ENCODE measurements at regions of chr1 and their contacts with region 1.

Region 1: DNA sequence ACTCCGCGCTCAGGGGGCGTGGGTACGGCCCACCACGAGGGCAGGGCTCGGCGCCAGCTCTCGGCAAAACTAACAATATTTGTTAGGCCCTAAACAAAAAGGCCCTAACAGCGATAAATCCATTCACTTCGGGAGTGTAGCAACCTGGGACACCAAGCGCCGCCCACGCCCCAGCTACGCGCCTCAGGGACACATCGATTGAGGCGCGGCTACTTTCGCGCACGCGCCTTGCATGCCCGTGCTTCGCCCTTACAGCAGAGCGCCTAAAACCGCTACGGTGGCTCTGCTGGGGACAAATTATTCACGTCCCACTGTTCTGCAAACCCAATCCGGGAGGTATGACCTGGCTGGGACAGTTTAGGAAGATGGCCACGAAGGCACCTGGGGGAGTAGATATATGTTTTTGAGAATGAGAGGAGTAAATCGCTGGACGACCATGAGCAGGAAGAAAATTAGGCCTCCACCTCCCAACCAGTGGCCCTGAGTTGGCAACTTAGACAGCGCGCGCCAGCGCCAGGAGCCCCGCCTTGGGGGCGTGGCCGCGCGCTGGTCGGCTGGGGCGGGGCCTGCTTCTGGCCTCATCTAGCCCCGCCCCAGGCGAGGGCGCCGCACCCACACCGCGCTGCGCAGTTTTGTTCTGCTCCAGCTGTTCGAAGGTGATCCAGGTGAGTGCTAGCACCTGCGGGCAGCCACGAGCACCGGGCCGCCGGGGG is at the start of gene MGST3:
- DNase-seq: peak; percentile 97
- H3K4me3 Mint-ChIP-seq: no peak within 1 kb of the TSS
- H3K27ac Mint-ChIP-seq: no peak within 1 kb of the TSS
- H3K4me1 Mint-ChIP-seq: peaks cover 15% of the 10 kb centered on the region
- H3K27me3 Mint-ChIP-seq: no peaks in the 10 kb centered on the region
- total RNA-seq, gene MGST3: 53.3 to 56.6 TPM

Region 2: GRCh38 chr1:165431079-165431478 is 199.7 kb before region 1 on chr1:
- CTCF ChIA-PET with region 1: no interaction called
- POLR2A ChIA-PET with region 1: no interaction called
- intact Hi-C with region 1: no loop called
- DNase-seq: no peak
- H3K4me3 Mint-ChIP-seq: no peak overlapping the region
- H3K27ac Mint-ChIP-seq: no peak overlapping the region
- H3K4me1 Mint-ChIP-seq: peaks cover 9% of the 10 kb centered on the region
- H3K27me3 Mint-ChIP-seq: no peaks in the 10 kb centered on the region

Region 3: GRCh38 chr1:165645654-165646366 is 15.0 kb after region 1 on chr1:
- CTCF ChIA-PET with region 1: no interaction called
- POLR2A ChIA-PET with region 1: no interaction called
- intact Hi-C with region 1: loop called (anchors 2 kb)
- DNase-seq: peak; percentile 38
- H3K4me3 Mint-ChIP-seq: no peak overlapping the region
- H3K27ac Mint-ChIP-seq: no peak overlapping the region
- H3K4me1 Mint-ChIP-seq: peaks cover 24% of the 10 kb centered on the region
- H3K27me3 Mint-ChIP-seq: no peaks in the 10 kb centered on the region

Region 4: GRCh38 chr1:165686121-165686970 is 55.6 kb after region 1 on chr1:
- CTCF ChIA-PET with region 1: no interaction called
- POLR2A ChIA-PET with region 1: no interaction called
- intact Hi-C with region 1: loop called (anchors 2 kb)
- DNase-seq: no peak
- H3K4me3 Mint-ChIP-seq: no peak overlapping the region
- H3K27ac Mint-ChIP-seq: peak overlapping the region; percentile 71
- H3K4me1 Mint-ChIP-seq: peaks cover 41% of the 10 kb centered on the region
- H3K27me3 Mint-ChIP-seq: no peaks in the 10 kb centered on the region

Region 5: GRCh38 chr1:165697881-165698760 is 67.3 kb after region 1 on chr1 and contains the start of gene ALDH9A1:
- CTCF ChIA-PET with region 1: interaction called, 10 read pairs
- POLR2A ChIA-PET with region 1: interaction called, 4 read pairs
- intact Hi-C with region 1: loop called (anchors 1 kb)
- DNase-seq: peak; percentile 93
- H3K4me3 Mint-ChIP-seq: peak within 1 kb of the TSS; percentile 100
- H3K27ac Mint-ChIP-seq: peak within 1 kb of the TSS; percentile 99
- H3K4me1 Mint-ChIP-seq: peaks cover 25% of the 10 kb centered on the region
- H3K27me3 Mint-ChIP-seq: no peaks in the 10 kb centered on the region
- total RNA-seq, gene ALDH9A1: 34.1 to 43.2 TPM

Region 6: DNA sequence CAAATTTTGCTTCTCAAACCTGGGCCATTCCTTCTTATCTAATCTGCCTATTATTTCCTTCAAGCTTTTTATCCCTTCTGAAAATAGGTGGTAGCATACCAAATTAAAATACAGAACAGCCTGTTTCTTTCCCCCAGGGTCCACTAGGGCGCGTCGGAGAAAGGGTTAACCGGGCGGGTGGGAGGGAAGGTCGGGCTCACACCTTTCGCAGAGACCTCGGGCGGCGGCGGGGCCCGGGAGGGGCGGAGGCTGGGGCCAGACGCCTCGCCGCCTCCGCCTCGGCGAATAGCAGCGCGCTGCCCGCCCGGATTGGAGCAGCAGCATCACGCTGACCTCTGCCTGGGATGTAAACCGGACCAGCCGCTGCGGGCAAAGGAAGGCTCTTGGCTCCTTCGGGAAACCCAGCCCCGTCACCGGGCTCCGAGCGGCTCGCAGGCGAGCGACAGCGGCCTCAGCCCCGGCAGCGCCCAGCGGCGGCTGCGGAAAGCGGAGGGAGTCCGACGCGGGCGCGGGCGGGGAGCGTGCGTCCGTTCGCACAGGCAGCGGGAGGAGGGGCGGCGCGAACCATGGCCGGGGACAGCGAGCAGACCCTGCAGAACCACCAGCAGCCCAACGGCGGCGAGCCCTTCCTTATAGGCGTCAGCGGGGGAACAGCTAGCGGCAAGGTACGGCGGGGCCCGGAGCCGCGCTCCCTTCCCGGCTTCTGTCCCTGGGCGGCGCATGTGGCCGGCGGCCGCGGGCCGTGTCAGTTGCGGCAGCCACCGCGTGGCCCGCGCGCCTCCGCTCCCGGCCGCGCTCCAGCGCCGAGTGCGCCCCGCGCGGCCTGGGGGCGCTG is 196.7 kb after region 1 on chr1 and contains the start of gene UCK2:
- CTCF ChIA-PET with region 1: no interaction called
- POLR2A ChIA-PET with region 1: no interaction called
- intact Hi-C with region 1: loop called (anchors 2 kb)
- DNase-seq: peak; percentile 75
- H3K4me3 Mint-ChIP-seq: peak within 1 kb of the TSS; percentile 91
- H3K27ac Mint-ChIP-seq: peak within 1 kb of the TSS; percentile 88
- H3K4me1 Mint-ChIP-seq: peaks cover 9% of the 10 kb centered on the region
- H3K27me3 Mint-ChIP-seq: no peaks in the 10 kb centered on the region
- total RNA-seq, gene UCK2: 60.1 to 61.8 TPM

Region 7: DNA sequence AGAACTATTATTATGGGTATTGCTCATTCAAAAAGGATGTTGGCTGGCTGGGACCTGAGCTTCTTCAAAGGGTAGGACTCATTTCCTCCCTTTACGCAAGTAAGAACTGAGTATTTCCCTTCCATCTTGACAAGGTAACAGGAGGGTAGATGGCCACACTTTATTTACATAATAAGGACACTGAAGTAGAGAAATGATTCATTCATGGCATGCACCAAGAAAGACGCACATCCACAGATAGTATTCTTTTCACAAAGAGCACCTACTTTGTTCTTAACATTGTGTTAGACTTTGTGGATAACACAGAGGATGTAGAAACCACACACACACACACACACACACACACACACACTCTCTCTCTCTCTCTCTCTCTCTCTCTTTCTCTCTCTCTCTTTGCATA is 453.1 kb after region 1 on chr1:
- CTCF ChIA-PET with region 1: no interaction called
- POLR2A ChIA-PET with region 1: no interaction called
- intact Hi-C with region 1: loop called (anchors 2 kb)
- DNase-seq: peak; percentile 41
- H3K4me3 Mint-ChIP-seq: no peak overlapping the region
- H3K27ac Mint-ChIP-seq: peak overlapping the region; percentile 29
- H3K4me1 Mint-ChIP-seq: peaks cover 40% of the 10 kb centered on the region
- H3K27me3 Mint-ChIP-seq: no peaks in the 10 kb centered on the region

Measured in activated CD4-positive, alpha-beta memory T cell treated with anti-CD3 and anti-CD28 coated beads for 36 hours (primary cell).